ENCODE measurements at regions of chr16 and their contacts with region 1.

Region 1: DNA sequence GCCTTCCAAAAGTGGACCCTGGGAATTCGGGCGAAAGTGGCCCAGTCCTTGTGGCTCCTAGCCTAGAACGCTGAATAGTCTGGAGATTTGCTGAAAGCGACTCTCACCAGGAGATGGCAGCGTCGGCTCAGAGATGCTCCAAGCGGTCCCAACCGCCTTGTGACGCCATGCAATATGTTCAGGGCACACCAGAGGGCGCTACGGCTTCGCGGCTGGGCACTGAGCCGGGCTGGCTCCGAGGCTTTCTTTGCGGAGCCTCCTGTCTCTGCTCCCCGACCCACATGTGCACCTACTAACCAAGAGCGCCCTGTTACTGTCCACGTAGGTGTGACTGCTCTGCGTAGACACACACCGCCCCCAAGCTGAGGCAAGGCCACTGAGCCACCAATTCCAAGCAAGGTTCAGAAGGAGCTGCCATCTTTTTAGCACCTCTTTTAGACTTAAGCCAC is 36.9 kb downstream of the SYCE1L start:
- DNase-seq: peak; percentile 87
- ATAC-seq: peak; percentile 97 to 98

Region 2: GRCh38 chr16:77443357-77444146 is 207.5 kb after region 1 on chr16:
- intact Hi-C with region 1: no loop called
- DNase-seq: no peak
- ATAC-seq: no peak

Region 3: DNA sequence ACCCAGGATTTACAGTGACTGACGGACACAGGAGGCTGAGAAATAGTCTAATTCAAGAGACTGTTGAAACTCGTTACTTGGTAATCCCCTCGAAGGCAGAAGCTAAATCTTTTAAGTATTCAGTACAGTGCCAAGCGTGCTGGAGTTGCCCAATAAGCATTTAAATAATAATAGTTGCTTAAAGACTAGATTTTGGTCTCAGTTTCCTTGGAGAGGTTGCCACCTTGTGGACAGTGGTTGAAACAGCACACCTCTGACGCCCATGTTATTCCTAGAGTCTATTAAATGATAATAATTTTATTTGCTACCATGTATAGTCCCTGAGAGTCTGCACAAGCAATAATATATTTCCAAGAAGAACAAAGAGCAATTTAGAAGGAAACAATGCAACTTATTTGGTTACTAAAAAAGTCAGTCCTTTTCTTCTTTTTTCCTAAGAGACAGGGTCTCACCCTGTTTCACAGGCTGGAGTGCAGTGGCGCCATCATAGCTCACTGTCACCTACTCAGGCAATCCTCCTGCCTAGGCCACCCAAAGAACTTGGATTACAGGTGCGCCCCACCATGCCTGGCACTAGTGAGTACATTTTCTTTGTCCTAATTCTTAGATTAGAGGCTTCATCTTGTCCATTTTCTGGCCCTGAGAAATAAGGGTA is 348.2 kb after region 1 on chr16:
- intact Hi-C with region 1: loop called (anchors 1 to 2 kb)
- DNase-seq: peak; percentile 25
- ATAC-seq: peak; percentile 48 to 52

Region 4: GRCh38 chr16:77660311-77660710 is 424.2 kb after region 1 on chr16:
- intact Hi-C with region 1: loop called (anchors 2 to 10 kb)
- DNase-seq: no peak
- ATAC-seq: peak in 1 of 2 donors; percentile 15

Measured in left cardiac atrium (tissue), 4 donors.